ENCODE measurements at regions of chr20 and their contacts with region 1.

Region 1: GRCh38 chr20:8689337-8689736 is 379.6 kb upstream of the PLCB4 start:
- DNase-seq: no peak
- ATAC-seq: no peak
- H3K4me3 Mint-ChIP-seq: no peak overlapping the region
- H3K27ac Mint-ChIP-seq: no peak overlapping the region
- H3K4me1 Mint-ChIP-seq: no peaks in the 10 kb centered on the region
- H3K27me3 Mint-ChIP-seq: no peaks in the 10 kb centered on the region

Region 2: GRCh38 chr20:8764344-8764962 is 75.1 kb after region 1 on chr20:
- CTCF ChIA-PET with region 1: no interaction called
- POLR2A ChIA-PET with region 1: no interaction called
- intact Hi-C with region 1: no loop called
- DNase-seq: no peak
- ATAC-seq: no peak
- H3K4me3 Mint-ChIP-seq: no peak overlapping the region
- H3K27ac Mint-ChIP-seq: no peak overlapping the region
- H3K4me1 Mint-ChIP-seq: no peaks in the 10 kb centered on the region
- H3K27me3 Mint-ChIP-seq: no peaks in the 10 kb centered on the region

Region 3: GRCh38 chr20:9427430-9428291 is 738.3 kb after region 1 on chr20:
- CTCF ChIA-PET with region 1: no interaction called
- POLR2A ChIA-PET with region 1: no interaction called
- intact Hi-C with region 1: no loop called
- DNase-seq: no peak
- ATAC-seq: no peak
- H3K4me3 Mint-ChIP-seq: no peak overlapping the region
- H3K27ac Mint-ChIP-seq: no peak overlapping the region
- H3K4me1 Mint-ChIP-seq: no peaks in the 10 kb centered on the region
- H3K27me3 Mint-ChIP-seq: peaks cover 1% of the 10 kb centered on the region

Region 4: DNA sequence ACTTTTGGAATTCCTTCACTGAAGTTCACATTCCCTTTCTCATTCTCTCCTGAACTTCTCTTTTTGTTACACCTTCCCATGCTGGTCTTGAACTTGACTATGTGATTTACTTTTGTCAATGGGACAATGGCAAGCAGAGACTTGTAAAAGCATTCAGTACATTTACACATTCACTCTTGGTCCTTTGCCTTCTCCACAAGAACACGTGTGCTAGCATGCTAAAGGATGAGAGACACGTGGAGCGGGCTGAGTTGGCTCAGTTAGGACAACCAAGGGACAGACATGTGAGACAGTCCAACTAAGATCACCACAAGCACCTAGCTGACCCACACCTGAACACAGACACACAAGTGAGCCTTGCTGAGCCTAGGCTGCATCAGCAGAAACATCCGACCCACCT is 1240.8 kb after region 1 on chr20:
- CTCF ChIA-PET with region 1: no interaction called
- POLR2A ChIA-PET with region 1: no interaction called
- intact Hi-C with region 1: loop called in 1 of 2 experiments (anchors 10 kb)
- DNase-seq: no peak
- ATAC-seq: no peak
- H3K4me3 Mint-ChIP-seq: no peak overlapping the region
- H3K27ac Mint-ChIP-seq: no peak overlapping the region
- H3K4me1 Mint-ChIP-seq: no peaks in the 10 kb centered on the region
- H3K27me3 Mint-ChIP-seq: peaks cover 4% of the 10 kb centered on the region